K562 (cell line): ENCODE measurements at regions of chr11 and their contacts with region 1.

Region 1: GRCh38 chr11:65859200-65859811 is 927 bp upstream of the MUS81 start:
- DNase-seq: peak; percentile 82 to 100 (median 89)
- ATAC-seq: peak; percentile 80
- H3K4me3 ChIP-seq: peak overlapping the region; percentile 95
- H3K27ac ChIP-seq: peak overlapping the region; percentile 96
- H3K4me1 ChIP-seq: peaks cover 14 to 73% of the 10 kb centered on the region in 2 experiments
- H3K27me3 ChIP-seq: no peaks in the 10 kb centered on the region; a peak in 1 of 5 replicates
- CTCF ChIP-seq: peak; percentile 12 to 31 (median 19); a peak in 3 of 6 replicates
- EP300 ChIP-seq: 0 out of 2 replicates have a peak, but pooled peaks have one; percentile 10
- POLR2A ChIP-seq: peak; percentile 98
- RAD21 ChIP-seq: no peak

Region 2: DNA sequence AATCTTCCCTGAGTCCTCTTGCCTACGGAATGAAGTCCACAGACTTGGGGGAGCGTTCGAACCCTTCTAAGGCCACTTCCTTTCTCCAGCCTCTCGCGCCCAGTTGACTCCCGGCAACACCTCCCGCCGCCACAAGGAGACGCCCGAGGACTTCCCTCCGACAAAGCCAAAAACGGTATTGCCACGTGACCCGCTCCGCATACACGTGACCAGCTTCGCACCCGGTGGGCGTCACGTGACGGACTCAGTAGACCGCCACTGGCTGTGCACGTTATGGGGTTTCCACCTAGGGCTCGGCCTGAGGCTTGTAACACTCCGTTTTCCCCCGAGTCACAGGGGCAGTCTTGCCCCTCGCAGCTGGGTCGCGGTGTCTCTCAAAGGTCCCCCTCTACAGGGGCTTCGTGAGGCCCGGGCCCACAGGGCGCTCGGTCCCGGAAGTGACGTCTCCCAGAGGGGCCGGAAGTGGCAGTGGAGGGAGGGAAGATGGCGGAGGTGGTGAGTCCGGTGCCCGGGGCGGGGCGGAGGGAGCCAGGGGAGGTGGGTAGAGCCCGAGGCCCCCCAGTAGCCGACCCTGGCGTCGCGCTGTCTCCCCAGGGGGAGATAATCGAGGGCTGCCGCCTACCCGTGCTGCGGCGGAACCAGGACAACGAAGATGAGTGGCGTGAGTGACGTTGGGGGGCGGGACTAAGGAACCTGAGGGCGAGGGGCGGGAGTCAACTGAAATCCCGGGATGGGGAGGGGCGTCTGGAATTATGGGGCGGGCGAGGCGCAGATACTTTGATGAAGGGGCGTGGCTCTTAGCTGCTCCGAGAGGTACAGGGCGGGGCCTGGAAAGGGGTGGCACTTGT is 147.3 kb before region 1 on chr11 and contains the start of gene KAT5:
- CTCF ChIA-PET with region 1: no interaction called
- POLR2A ChIA-PET with region 1: interaction called, 11 read pairs
- in situ Hi-C with region 1: no loop called
- intact Hi-C with region 1: no loop called
- DNase-seq: peak; percentile 93 to 99 (median 95)
- ATAC-seq: peak; percentile 93
- H3K4me3 ChIP-seq: peak within 1 kb of the TSS; percentile 59
- H3K27ac ChIP-seq: peak within 1 kb of the TSS; percentile 98
- H3K4me1 ChIP-seq: peaks cover 17 to 28% of the 10 kb centered on the region in 2 experiments
- H3K27me3 ChIP-seq: no peaks in the 10 kb centered on the region
- CTCF ChIP-seq: peak; percentile 97 to 99 (median 98)
- EP300 ChIP-seq: 0 out of 2 replicates have a peak, but pooled peaks have one; percentile 34
- POLR2A ChIP-seq: peak; percentile 93
- RAD21 ChIP-seq: peak; percentile 96 to 97
- polyA plus RNA-seq, gene KAT5: 3.6 to 12.9 TPM

Region 3: GRCh38 chr11:65826962-65827735 is 32.2 kb before region 1 on chr11:
- CTCF ChIA-PET with region 1: no interaction called
- POLR2A ChIA-PET with region 1: interaction called, 18 read pairs
- in situ Hi-C with region 1: no loop called
- intact Hi-C with region 1: no loop called
- DNase-seq: peak in 2 of 4 experiments; percentile 3 to 5
- ATAC-seq: no peak
- H3K4me3 ChIP-seq: no peak overlapping the region
- H3K27ac ChIP-seq: no peak overlapping the region
- H3K4me1 ChIP-seq: no peaks in the 10 kb centered on the region
- H3K27me3 ChIP-seq: peaks cover 3 to 5% of the 10 kb centered on the region in 2 experiments; a peak in 2 of 5 replicates
- CTCF ChIP-seq: no peak
- EP300 ChIP-seq: no peak
- POLR2A ChIP-seq: no peak
- RAD21 ChIP-seq: no peak

Region 4: DNA sequence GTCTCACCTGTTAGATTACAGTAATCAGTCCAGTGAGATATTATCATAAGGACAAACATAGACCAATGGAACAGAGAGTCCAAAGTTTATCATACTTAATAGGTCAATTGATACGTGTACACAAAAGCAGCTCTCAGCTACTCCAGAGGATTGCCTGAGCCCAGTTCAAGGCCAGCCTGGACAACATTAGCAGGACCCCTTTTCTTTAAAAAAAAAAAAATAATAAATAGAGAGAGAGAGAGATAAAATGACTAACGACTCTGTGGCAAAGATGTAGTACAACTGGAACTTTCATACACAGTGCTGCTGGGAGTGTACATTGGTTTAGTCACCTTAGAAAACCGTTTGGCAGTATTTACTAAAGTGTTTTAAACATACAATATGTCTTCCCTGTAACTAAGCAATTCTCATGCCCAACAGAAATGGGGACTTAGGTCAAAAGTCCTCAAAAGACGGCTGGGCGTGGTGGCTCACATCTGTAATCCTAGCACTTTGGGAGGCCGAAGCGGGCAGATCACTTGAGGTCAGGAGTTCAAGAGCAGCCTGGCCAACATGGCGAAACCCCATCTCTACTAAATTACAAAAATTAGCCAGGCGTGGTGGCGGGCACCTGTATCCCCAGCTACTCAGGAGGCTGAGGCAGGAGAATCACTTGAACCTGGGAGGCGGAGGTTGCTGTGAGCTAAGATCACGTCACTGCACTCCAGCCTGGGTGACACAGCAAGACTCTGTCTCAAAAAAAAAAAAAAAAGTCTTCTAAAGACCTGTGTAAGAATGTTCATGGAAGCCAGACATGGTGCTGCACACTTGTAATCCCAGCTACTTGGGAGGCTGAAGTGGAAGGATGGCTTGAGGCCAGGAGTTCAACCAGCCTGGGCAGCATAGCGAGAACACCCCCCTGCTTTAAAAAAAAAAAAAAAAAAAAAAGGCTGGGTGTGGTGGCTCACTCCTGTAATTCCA is 14.8 kb before region 1 on chr11:
- CTCF ChIA-PET with region 1: no interaction called
- POLR2A ChIA-PET with region 1: interaction called, 58 read pairs
- in situ Hi-C with region 1: no loop called
- intact Hi-C with region 1: no loop called
- DNase-seq: no peak
- ATAC-seq: peak; percentile 35; the same call in 1 of the 3 replicates
- H3K4me3 ChIP-seq: no peak overlapping the region
- H3K27ac ChIP-seq: no peak overlapping the region
- H3K4me1 ChIP-seq: peaks cover 0 to 6% of the 10 kb centered on the region in 2 experiments; a peak in 3 of 5 replicates
- H3K27me3 ChIP-seq: no peaks in the 10 kb centered on the region
- CTCF ChIP-seq: no peak
- EP300 ChIP-seq: no peak
- POLR2A ChIP-seq: no peak
- RAD21 ChIP-seq: no peak

Region 5: DNA sequence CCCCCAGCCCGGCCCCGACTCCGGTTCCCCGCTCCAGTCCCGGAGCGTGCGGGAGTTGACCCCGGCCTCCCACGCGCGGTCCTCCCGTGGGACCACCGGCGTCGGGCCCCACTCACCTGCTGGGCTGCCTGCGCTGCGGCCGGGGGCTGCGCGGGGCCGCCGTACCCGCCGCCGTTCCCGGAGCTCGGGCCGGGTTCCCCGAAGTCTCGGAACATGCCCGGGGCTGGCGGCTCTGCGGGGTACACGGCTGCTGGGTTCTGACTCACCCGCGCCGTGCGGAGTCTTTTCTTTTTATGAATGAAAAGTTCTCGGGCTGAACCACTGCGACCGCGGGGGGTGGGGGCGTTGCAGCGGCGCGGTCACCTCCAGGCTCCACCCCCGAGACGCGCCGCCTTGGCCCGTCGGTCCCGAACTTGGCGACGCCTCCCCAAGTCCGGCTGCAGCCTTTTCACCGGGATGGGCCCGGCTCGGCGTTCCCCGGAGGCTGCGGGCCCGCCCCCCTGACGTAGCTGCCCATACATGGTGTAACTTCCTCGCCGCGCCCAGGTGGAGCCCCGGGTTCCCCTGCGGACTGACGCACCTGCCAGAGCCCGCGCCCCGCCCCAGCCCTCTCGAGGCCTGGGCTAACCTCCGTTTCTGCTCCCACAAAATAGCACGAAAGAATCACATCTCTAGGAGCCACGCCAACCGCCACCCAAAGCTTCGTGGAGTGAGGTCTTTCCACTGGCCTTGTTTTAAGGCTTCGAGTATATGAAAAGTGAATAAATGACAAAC is 41.0 kb after region 1 on chr11 and contains the start of gene FOSL1:
- CTCF ChIA-PET with region 1: no interaction called
- POLR2A ChIA-PET with region 1: interaction called, 96 read pairs
- in situ Hi-C with region 1: no loop called
- intact Hi-C with region 1: loop called (anchors 5 kb)
- DNase-seq: peak; percentile 89 to 97 (median 92)
- ATAC-seq: peak; percentile 90
- H3K4me3 ChIP-seq: peak within 1 kb of the TSS; percentile 89
- H3K27ac ChIP-seq: peak within 1 kb of the TSS; percentile 100
- H3K4me1 ChIP-seq: peaks cover 42 to 70% of the 10 kb centered on the region in 2 experiments
- H3K27me3 ChIP-seq: no peaks in the 10 kb centered on the region
- CTCF ChIP-seq: no peak
- EP300 ChIP-seq: peak; percentile 39; the same call in 1 of the 2 replicates
- POLR2A ChIP-seq: peak; percentile 97
- RAD21 ChIP-seq: 0 out of 4 replicates have a peak, but pooled peaks of 1 of the 2 experiments have one; percentile 7
- polyA plus RNA-seq, gene FOSL1: 3.5 to 4.2 TPM

Region 6: DNA sequence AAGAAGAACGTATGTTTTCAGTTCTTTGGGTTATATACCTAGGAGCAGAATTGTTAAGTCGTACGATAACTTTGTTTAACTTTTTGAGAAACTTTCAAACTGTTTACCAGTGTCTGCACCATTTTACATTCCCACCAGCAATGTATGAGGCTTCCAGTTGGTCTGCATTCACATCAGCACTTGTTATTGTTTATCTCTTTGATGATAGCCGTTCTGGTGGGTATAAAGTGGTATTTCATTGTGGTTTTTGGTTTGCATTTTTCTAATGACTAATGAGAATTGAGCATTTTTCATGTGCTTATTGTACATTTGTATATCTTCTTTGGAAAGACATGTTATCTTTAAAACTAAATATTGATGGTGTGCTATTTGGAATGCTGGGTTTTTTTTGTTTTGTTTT is 1319.6 kb after region 1 on chr11:
- CTCF ChIA-PET with region 1: no interaction called
- POLR2A ChIA-PET with region 1: no interaction called
- in situ Hi-C with region 1: no loop called
- intact Hi-C with region 1: no loop called
- DNase-seq: no peak
- ATAC-seq: no peak
- H3K4me3 ChIP-seq: no peak overlapping the region
- H3K27ac ChIP-seq: no peak overlapping the region
- H3K4me1 ChIP-seq: peaks cover 4 to 10% of the 10 kb centered on the region in 2 experiments; a peak in 4 of 5 replicates
- H3K27me3 ChIP-seq: no peaks in the 10 kb centered on the region
- CTCF ChIP-seq: no peak
- EP300 ChIP-seq: no peak
- POLR2A ChIP-seq: no peak
- RAD21 ChIP-seq: no peak